Heart left ventricle (tissue), 16 donors: ENCODE measurements at regions of chr16 and their contacts with region 1.

Region 1: GRCh38 chr16:89431158-89431584 is 59.2 kb downstream of the ANKRD11 start:
- DNase-seq: no peak
- ATAC-seq: peak; percentile 56 to 79 (median 72)
- H3K4me3 ChIP-seq: no peak overlapping the region
- H3K27ac ChIP-seq: no peak overlapping the region
- H3K4me1 ChIP-seq: peaks cover 0 to 62% (median 40%) of the 10 kb centered on the region in 12 donors
- H3K27me3 ChIP-seq: no peaks in the 10 kb centered on the region
- CTCF ChIP-seq: no peak
- POLR2A ChIP-seq: no peak

Region 2: DNA sequence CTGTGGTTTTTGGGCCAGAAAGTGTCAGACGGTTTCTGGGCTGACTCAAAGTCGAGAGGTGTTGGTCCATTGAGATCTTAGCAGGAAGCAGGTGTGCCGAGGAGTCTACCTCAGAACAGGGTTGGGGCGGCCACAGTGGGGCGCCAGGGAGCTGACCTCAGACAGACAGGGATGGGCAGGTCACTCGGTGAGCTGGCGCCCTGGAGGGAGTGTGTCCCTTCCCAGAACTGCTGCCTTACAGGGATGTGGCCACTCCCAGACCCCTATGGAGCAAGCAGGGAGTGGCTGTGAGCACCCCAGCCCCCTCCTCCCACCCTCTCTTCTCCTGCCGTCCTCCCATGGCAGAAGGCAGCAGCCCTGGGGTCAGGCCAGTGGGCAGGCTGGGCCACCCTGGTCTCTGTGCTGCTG is 168.3 kb after region 1 on chr16:
- intact Hi-C with region 1: no loop called
- DNase-seq: no peak
- ATAC-seq: no peak
- H3K4me3 ChIP-seq: no peak overlapping the region
- H3K27ac ChIP-seq: no peak overlapping the region
- H3K4me1 ChIP-seq: peaks cover 0 to 14% (median 3%) of the 10 kb centered on the region in 12 donors
- H3K27me3 ChIP-seq: no peaks in the 10 kb centered on the region
- CTCF ChIP-seq: no peak
- POLR2A ChIP-seq: no peak

Region 3: GRCh38 chr16:89764711-89765201 is 333.6 kb after region 1 on chr16:
- intact Hi-C with region 1: loop called in 1 of 10 experiments (anchors 2 kb)
- DNase-seq: peak in 4 of 5 donors; percentile 27 to 58 (median 46)
- ATAC-seq: peak; percentile 39 to 79 (median 66)
- H3K4me3 ChIP-seq: peak overlapping the region in 4 of 12 donors; percentile 24 to 49 (median 28)
- H3K27ac ChIP-seq: peak overlapping the region in 2 of 12 donors; percentile 0 to 78
- H3K4me1 ChIP-seq: peaks cover 0 to 41% (median 0%) of the 10 kb centered on the region in 12 donors
- H3K27me3 ChIP-seq: no peaks in the 10 kb centered on the region
- CTCF ChIP-seq: no peak
- POLR2A ChIP-seq: no peak